AG04450 (cell line): ENCODE measurements at regions of chr1 and their contacts with region 1.

Region 1: GRCh38 chr1:246689409-246690008 is 34.7 kb upstream of the SCCPDH start:
- DNase-seq: peak; percentile 37
- H3K4me3 ChIP-seq: peak overlapping the region; percentile 38
- H3K27ac ChIP-seq: no peak overlapping the region
- H3K27me3 ChIP-seq: no peaks in the 10 kb centered on the region
- CTCF ChIP-seq: peak; percentile 95

Region 2: GRCh38 chr1:246476771-246477170 is 212.7 kb before region 1 on chr1:
- CTCF ChIA-PET with region 1: no interaction called
- POLR2A ChIA-PET with region 1: no interaction called
- DNase-seq: no peak
- H3K4me3 ChIP-seq: no peak overlapping the region
- H3K27ac ChIP-seq: no peak overlapping the region
- H3K27me3 ChIP-seq: no peaks in the 10 kb centered on the region
- CTCF ChIP-seq: no peak

Region 3: GRCh38 chr1:246647113-246647512 is 42.4 kb before region 1 on chr1:
- CTCF ChIA-PET with region 1: interaction called, 32 read pairs
- POLR2A ChIA-PET with region 1: no interaction called
- DNase-seq: peak; percentile 33
- H3K4me3 ChIP-seq: peak overlapping the region; percentile 10
- H3K27ac ChIP-seq: peak overlapping the region; percentile 40
- H3K27me3 ChIP-seq: no peaks in the 10 kb centered on the region
- CTCF ChIP-seq: peak; percentile 88

Region 4: DNA sequence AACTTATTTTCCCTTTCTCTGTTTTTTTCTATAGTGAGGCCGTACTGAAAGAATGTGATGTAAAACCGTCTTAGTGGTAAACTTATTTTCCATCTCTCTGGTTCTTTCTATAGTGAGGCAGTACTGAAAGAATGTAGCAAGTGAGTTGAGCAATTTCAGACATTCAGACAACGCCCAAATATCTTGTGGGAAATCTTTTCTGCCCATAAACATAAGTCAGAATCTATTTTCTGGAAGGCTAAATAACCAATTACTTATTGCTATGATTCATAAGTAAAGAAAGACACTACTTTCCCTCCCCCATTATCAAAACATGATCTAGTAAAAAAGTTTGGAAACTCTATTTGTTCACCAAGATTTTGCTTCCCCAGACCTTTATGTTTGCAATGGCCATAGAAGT is 15.9 kb after region 1 on chr1:
- CTCF ChIA-PET with region 1: interaction called, 10 read pairs
- POLR2A ChIA-PET with region 1: no interaction called
- DNase-seq: peak; percentile 79
- H3K4me3 ChIP-seq: no peak overlapping the region
- H3K27ac ChIP-seq: peak overlapping the region; percentile 94
- H3K27me3 ChIP-seq: no peaks in the 10 kb centered on the region
- CTCF ChIP-seq: no peak

Region 5: GRCh38 chr1:246724016-246724730 is 34.7 kb after region 1 on chr1 and contains the start of gene SCCPDH:
- CTCF ChIA-PET with region 1: interaction called, 16 read pairs
- POLR2A ChIA-PET with region 1: no interaction called
- DNase-seq: no peak
- H3K4me3 ChIP-seq: peak within 1 kb of the TSS; percentile 76
- H3K27ac ChIP-seq: peak within 1 kb of the TSS; percentile 39
- H3K27me3 ChIP-seq: no peaks in the 10 kb centered on the region
- CTCF ChIP-seq: no peak
- polyA plus RNA-seq, gene SCCPDH: 37.0 and 46.6 TPM in 2 replicates

Region 6: GRCh38 chr1:246753670-246754535 is 64.4 kb after region 1 on chr1:
- CTCF ChIA-PET with region 1: interaction called, 18 read pairs
- POLR2A ChIA-PET with region 1: no interaction called
- DNase-seq: peak; percentile 41
- H3K4me3 ChIP-seq: no peak overlapping the region
- H3K27ac ChIP-seq: no peak overlapping the region
- H3K27me3 ChIP-seq: no peaks in the 10 kb centered on the region
- CTCF ChIP-seq: peak; percentile 85

Region 7: DNA sequence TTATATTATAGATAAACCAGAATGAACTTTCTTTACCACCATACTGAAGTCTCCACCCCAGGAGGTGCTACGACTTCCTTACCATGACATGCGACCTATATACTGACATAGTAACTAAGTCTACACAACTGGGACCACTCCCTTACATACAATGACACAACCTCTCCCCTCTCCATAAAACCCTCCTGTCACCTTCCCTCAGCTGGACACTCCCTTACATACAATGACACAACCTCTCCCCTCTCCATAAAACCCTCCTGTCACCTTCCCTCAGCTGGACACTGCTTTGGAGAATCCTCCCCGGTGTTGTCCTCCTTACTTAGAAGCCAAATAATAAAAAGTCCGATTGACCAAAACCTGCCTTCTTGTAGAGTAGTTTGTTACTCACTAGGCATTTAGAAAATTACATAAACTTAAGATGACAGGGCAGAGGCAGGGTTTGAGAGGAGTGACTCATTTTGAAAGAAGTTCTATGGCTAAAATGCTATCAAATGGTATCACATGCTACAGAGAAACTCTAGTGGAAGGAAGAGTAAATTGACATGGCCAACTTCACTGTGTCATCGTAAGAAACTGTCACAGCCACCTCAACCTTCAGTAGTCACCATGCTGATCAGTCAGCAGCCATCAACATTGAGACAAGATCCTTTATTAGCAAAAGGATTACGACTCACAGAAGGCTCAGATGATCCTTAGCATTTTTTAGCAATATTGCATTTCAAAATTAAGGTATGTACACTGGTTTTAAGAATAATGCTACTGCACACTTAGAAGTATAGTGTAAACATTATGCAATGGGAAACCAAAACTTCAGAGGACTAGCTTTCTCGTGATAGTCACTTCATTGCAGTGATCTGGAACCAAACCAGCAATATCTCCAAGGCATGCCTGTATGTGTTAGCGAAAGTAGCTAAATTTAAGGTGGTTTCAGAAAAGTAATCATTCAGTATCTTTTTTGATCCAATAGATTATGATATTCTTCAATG is 185.8 kb after region 1 on chr1:
- CTCF ChIA-PET with region 1: no interaction called
- POLR2A ChIA-PET with region 1: no interaction called
- DNase-seq: peak; percentile 54
- H3K4me3 ChIP-seq: no peak overlapping the region
- H3K27ac ChIP-seq: peak overlapping the region; percentile 73
- H3K27me3 ChIP-seq: no peaks in the 10 kb centered on the region
- CTCF ChIP-seq: no peak